Activated T-helper 1 cell treated with anti-CD3 and anti-CD28 coated beads, Interleukin-12 subunit alpha, Interleukin-12 subunit beta, Interleukin-2, Interleukin-4 antibody, amounts not matched to agents 30 ng/mL and 10 ng/mL and 1 ng/mL, durations not matched to agents 14 hours and 24 hours and 36 hours (primary cell): ENCODE measurements at regions of chrX and their contacts with region 1.

Region 1: DNA sequence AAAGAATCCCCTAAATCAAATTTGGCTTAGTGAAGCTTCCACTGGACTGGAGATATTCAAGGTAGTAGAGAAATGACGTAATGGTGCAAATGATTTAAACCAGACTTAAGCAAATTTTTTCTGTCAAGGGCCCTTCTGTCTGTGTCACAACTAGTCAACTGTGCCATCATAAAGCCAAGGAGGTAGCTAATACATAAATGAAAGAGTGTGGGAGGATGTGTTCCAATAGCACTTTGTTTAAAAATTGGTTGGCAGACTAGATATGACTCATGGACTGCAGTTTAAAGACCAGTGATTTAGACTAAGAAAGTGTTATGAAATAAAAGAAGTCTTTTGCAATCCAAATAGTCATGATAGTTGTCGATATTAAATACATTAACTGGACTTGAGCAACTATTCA is 24.3 kb upstream of the TEX13C start:
- DNase-seq: no peak
- H3K4me3 Mint-ChIP-seq: peak overlapping the region; percentile 3
- H3K27ac Mint-ChIP-seq: peak overlapping the region; percentile 61
- H3K4me1 Mint-ChIP-seq: peaks cover 18% of the 10 kb centered on the region
- H3K27me3 Mint-ChIP-seq: no peaks in the 10 kb centered on the region

Region 2: GRCh38 chrX:124395145-124395880 is 900.0 kb before region 1 on chrX:
- intact Hi-C with region 1: loop called (anchors 10 kb)
- DNase-seq: no peak
- H3K4me3 Mint-ChIP-seq: no peak overlapping the region
- H3K27ac Mint-ChIP-seq: no peak overlapping the region
- H3K4me1 Mint-ChIP-seq: peaks cover 21% of the 10 kb centered on the region
- H3K27me3 Mint-ChIP-seq: no peaks in the 10 kb centered on the region